CD8-positive, alpha-beta memory T cell (primary cell): ENCODE measurements at regions of chr12 and their contacts with region 1.

Region 1: GRCh38 chr12:98593351-98594049 is at the start of gene SLC25A3:
- DNase-seq: peak; percentile 91 to 97 (median 94)
- H3K4me3 ChIP-seq: peak within 1 kb of the TSS; percentile 84
- H3K4me3 Mint-ChIP-seq: peak within 1 kb of the TSS; percentile 90 to 100 (median 95)
- H3K27ac ChIP-seq: peak within 1 kb of the TSS; percentile 98
- H3K27ac Mint-ChIP-seq: peak within 1 kb of the TSS; percentile 94 to 100 (median 97)
- H3K4me1 ChIP-seq: peaks cover 37% of the 10 kb centered on the region
- H3K4me1 Mint-ChIP-seq: peaks cover 38 to 47% (median 40%) of the 10 kb centered on the region in 3 donors
- H3K27me3 ChIP-seq: no peaks in the 10 kb centered on the region
- H3K27me3 Mint-ChIP-seq: no peaks in the 10 kb centered on the region
- total RNA-seq, gene SLC25A3: 668 to 674 TPM

Region 2: GRCh38 chr12:98096436-98096835 is 497.1 kb before region 1 on chr12:
- CTCF ChIA-PET with region 1: no interaction called
- POLR2A ChIA-PET with region 1: no interaction called
- DNase-seq: no peak
- H3K4me3 ChIP-seq: no peak overlapping the region
- H3K4me3 Mint-ChIP-seq: no peak overlapping the region
- H3K27ac ChIP-seq: no peak overlapping the region
- H3K27ac Mint-ChIP-seq: no peak overlapping the region
- H3K4me1 ChIP-seq: no peaks in the 10 kb centered on the region
- H3K4me1 Mint-ChIP-seq: no peaks in the 10 kb centered on the region
- H3K27me3 ChIP-seq: no peaks in the 10 kb centered on the region
- H3K27me3 Mint-ChIP-seq: peaks cover 0 to 8% of the 10 kb centered on the region in 2 donors

Region 3: DNA sequence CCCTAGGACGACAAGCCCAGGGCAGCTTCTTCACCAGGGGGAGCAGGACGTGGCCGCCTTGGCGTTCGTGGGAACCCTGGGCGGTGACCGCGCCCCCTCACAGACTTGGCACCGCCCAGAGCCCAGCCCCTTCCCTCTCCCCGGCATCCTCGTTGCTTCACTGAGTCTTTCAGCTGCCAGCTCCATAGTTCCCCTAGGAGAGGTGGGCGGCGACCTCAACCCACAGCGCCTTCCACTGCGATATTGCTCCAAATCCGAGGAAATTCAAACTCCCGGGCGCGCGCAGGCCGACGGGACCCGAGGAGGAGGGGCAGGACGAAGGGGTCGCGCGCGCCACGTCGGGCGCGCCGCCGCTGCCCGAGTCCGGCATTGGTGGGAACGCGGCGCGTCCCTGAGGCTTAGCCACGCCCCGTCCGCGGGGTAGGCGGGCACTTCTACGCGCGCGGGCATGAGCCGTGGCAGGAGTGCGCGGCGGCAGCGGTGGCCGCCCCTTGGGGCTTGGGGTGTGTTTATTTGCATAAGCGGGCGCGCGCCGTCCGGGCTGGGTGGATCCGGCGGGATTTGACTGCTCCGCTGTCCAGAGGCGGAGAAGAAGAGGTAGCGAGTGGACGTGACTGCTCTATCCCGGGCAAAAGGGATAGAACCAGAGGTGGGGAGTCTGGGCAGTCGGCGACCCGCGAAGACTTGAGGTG is 51.4 kb after region 1 on chr12 and contains the starts of genes APAF1 and IKBIP:
- CTCF ChIA-PET with region 1: interaction called, 5 read pairs
- POLR2A ChIA-PET with region 1: interaction called, 37 read pairs
- DNase-seq: peak; percentile 95 to 97 (median 96)
- H3K4me3 ChIP-seq: peak within 1 kb of the TSS; percentile 97
- H3K4me3 Mint-ChIP-seq: peak within 1 kb of the TSS; percentile 97 to 100 (median 98)
- H3K27ac ChIP-seq: peak within 1 kb of the TSS; percentile 91
- H3K27ac Mint-ChIP-seq: peak within 1 kb of the TSS; percentile 90 to 99 (median 95)
- H3K4me1 ChIP-seq: peaks cover 16% of the 10 kb centered on the region
- H3K4me1 Mint-ChIP-seq: peaks cover 37 to 72% (median 58%) of the 10 kb centered on the region in 3 donors
- H3K27me3 ChIP-seq: no peaks in the 10 kb centered on the region
- H3K27me3 Mint-ChIP-seq: no peaks in the 10 kb centered on the region
- total RNA-seq, gene APAF1: 13.9 to 14.6 TPM
- total RNA-seq, gene IKBIP: 29.4 to 30.4 TPM